ENCODE measurements at regions of chr22 and their contacts with region 1.

Region 1: GRCh38 chr22:35660291-35661127 is 12.3 kb downstream of the APOL6 start:
- DNase-seq: peak; percentile 78 to 91 (median 80)
- H3K4me3 ChIP-seq: peak overlapping the region; percentile 11 to 34
- H3K4me3 Mint-ChIP-seq: peak overlapping the region; percentile 52 to 87 (median 79)
- H3K27ac ChIP-seq: peak overlapping the region; percentile 90
- H3K27ac Mint-ChIP-seq: peak overlapping the region; percentile 92 to 99 (median 96)
- H3K4me1 ChIP-seq: peaks cover 80% of the 10 kb centered on the region
- H3K4me1 Mint-ChIP-seq: peaks cover 45 to 87% (median 70%) of the 10 kb centered on the region in 4 donors
- H3K27me3 ChIP-seq: no peaks in the 10 kb centered on the region
- H3K27me3 Mint-ChIP-seq: no peaks in the 10 kb centered on the region

Region 2: DNA sequence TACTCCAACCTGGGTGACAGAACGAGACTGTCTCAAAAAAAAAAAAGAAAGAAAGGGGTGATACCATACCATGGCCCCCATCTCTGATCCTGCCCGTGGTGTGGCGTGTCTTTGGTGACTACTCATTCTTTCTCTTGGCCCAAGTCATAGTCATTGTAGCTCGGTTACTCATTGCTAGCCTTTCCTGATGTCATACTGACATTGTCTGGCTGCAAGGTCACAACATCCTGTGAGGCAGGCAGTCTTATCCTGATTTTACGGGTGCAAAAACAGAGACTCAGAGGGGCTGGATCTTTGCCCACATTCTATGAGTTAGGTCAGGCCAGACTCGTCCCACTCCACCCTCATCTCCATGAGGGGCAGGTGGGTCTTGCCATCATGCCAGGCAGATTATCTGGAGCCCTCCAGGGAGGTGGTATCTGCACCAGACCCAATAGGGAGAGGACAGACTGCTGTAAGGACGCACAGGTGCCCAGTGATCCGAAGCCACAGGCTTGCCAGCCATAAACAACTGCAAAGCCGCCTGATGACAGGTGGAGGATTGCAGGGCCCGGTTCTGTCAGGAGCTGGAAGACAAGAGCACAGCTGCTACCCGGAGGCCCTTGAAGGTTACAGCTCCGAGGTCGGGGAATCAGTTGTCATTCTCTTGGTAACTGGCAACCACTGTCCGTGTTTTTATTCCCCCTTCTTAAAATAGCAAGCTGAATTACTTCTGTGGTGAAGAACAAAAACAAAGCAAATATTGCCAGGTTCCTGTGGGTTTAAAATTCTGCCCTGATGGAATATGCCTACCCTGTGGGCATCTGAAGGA is 347.0 kb before region 1 on chr22:
- CTCF ChIA-PET with region 1: no interaction called
- POLR2A ChIA-PET with region 1: no interaction called
- intact Hi-C with region 1: no loop called
- DNase-seq: no peak
- H3K4me3 ChIP-seq: no peak overlapping the region
- H3K4me3 Mint-ChIP-seq: peak overlapping the region in 3 of 8 donors; percentile 35 to 43 (median 39)
- H3K27ac ChIP-seq: no peak overlapping the region
- H3K27ac Mint-ChIP-seq: peak overlapping the region in 4 of 7 donors; percentile 30 to 66 (median 46)
- H3K4me1 ChIP-seq: peaks cover 76% of the 10 kb centered on the region
- H3K4me1 Mint-ChIP-seq: peaks cover 49 to 76% (median 69%) of the 10 kb centered on the region in 4 donors
- H3K27me3 ChIP-seq: no peaks in the 10 kb centered on the region
- H3K27me3 Mint-ChIP-seq: no peaks in the 10 kb centered on the region

Region 3: DNA sequence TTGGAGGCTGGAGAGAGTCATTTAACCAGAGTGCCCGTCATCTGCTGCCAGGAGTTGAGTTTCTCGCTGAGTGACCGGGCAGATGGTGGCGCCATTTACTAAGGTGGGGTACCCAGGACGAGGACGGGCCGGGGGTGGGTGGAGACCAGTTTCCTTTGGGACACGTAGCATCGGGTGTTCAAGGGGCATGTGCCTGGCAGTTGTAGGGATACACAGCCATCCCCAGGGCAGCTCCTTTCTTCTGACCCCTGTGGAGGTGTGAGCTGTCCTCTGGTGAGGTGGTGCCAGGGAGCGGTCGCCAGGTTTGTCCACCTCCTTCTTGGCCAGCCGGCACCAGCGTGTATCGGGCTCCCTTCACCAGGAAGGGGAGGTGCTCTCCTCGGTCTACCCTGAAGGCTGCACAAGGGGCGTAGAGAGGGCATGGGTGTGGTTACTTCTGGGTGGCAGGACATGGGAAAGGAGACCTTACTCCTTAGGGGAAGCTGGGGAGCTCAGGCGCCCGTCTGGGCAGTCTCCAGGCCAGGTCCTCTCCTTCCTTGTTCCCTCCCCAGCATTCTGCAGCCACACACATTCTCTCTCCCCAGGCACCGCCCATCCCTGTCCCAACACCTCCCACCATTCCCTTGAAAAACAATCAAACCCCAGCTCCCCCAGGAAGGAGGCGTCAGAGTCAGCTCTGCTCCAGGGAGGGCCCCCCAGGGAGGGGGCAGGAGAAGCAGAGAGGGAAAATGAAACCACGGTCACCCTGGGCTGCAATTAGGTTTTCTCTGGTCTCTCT is 33.1 kb before region 1 on chr22:
- CTCF ChIA-PET with region 1: interaction called, 12 read pairs
- POLR2A ChIA-PET with region 1: interaction called, 5 read pairs
- intact Hi-C with region 1: no loop called
- DNase-seq: peak in 4 of 5 donors; percentile 22 to 37 (median 31)
- H3K4me3 ChIP-seq: peak overlapping the region in 1 of 2 donors; percentile 30
- H3K4me3 Mint-ChIP-seq: peak overlapping the region; percentile 31 to 85 (median 72)
- H3K27ac ChIP-seq: no peak overlapping the region
- H3K27ac Mint-ChIP-seq: peak overlapping the region; percentile 10 to 74 (median 66)
- H3K4me1 ChIP-seq: peaks cover 16% of the 10 kb centered on the region
- H3K4me1 Mint-ChIP-seq: peaks cover 10 to 23% (median 18%) of the 10 kb centered on the region in 4 donors
- H3K27me3 ChIP-seq: no peaks in the 10 kb centered on the region
- H3K27me3 Mint-ChIP-seq: peaks cover 0 to 2% of the 10 kb centered on the region in 2 donors

Measured in CD4-positive, alpha-beta memory T cell (primary cell).